ENCODE measurements at regions of chr19 and their contacts with region 1.

Region 1: GRCh38 chr19:18281082-18282020 is at the start of gene JUND:
- DNase-seq: peak; percentile 98
- H3K4me3 ChIP-seq: peak within 1 kb of the TSS; percentile 86
- H3K27ac ChIP-seq: peak within 1 kb of the TSS; percentile 100
- H3K4me1 ChIP-seq: peaks cover 23% of the 10 kb centered on the region
- H3K27me3 ChIP-seq: no peaks in the 10 kb centered on the region
- CTCF ChIP-seq: no peak
- total RNA-seq, gene JUND: 128 and 136 TPM in 2 replicates

Region 2: GRCh38 chr19:17966550-17967256 is 314.6 kb before region 1 on chr19 and contains the start of gene KCNN1:
- CTCF ChIA-PET with region 1: interaction called, 4 read pairs
- POLR2A ChIA-PET with region 1: interaction called, 11 read pairs
- intact Hi-C with region 1: no loop called
- DNase-seq: peak; percentile 83
- H3K4me3 ChIP-seq: peak within 1 kb of the TSS; percentile 90
- H3K27ac ChIP-seq: peak within 1 kb of the TSS; percentile 90
- H3K4me1 ChIP-seq: peaks cover 59% of the 10 kb centered on the region
- H3K27me3 ChIP-seq: no peaks in the 10 kb centered on the region
- CTCF ChIP-seq: no peak
- total RNA-seq, gene KCNN1: 63.5 and 81.2 TPM in 2 replicates

Region 3: GRCh38 chr19:18176367-18177310 is 104.7 kb before region 1 on chr19:
- CTCF ChIA-PET with region 1: no interaction called
- POLR2A ChIA-PET with region 1: no interaction called
- intact Hi-C with region 1: no loop called
- DNase-seq: no peak
- H3K4me3 ChIP-seq: no peak overlapping the region
- H3K27ac ChIP-seq: no peak overlapping the region
- H3K4me1 ChIP-seq: no peaks in the 10 kb centered on the region
- H3K27me3 ChIP-seq: no peaks in the 10 kb centered on the region
- CTCF ChIP-seq: no peak

Region 4: DNA sequence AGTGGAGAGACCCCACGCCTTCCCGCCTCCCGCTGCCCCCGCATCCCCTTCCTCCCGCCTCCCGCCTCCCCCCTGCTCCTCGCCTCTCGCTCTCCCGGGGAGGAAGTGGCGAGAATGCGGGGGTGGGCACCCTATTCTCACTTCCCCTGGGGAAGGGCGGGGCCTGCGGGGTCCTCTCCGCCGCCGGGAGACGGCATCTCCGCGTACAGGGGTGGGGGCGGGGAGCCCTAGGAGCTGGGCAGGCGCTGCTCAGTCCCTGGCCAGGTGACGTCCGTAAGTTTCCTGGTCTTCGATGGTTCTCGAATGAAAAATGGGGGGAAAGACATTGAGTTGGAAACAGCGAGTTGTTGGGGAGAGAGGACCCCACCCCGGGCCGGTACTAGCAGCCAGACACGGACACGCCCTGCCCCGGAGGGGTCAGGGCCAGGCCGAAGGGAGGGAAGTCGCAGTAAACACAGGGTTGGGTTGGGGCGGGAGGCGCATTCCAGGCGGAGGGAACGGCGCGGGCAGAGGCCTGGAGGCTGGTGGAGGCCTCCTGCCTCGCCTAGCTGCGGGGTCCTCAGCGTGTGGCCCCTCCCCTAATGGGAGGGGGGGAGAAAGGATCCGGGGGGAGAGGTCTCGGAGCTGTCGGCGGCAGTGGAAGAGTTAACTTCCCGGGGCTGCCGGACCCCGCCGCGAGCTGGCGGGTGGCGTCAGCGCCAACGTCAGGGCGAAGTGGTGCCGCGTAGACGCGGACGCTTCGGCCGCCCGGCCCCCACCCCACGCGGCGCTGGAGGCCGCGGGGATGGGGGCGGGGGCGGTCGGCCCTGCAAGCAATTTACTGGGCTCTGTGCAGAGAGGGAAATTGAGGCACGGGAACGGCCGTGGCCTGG is 10.5 kb after region 1 on chr19:
- CTCF ChIA-PET with region 1: interaction called, 16 read pairs
- POLR2A ChIA-PET with region 1: interaction called, 88 read pairs
- intact Hi-C with region 1: no loop called
- DNase-seq: peak; percentile 88
- H3K4me3 ChIP-seq: peak overlapping the region; percentile 64
- H3K27ac ChIP-seq: peak overlapping the region; percentile 98
- H3K4me1 ChIP-seq: peaks cover 40% of the 10 kb centered on the region
- H3K27me3 ChIP-seq: no peaks in the 10 kb centered on the region
- CTCF ChIP-seq: no peak

Region 5: GRCh38 chr19:18322759-18323460 is 41.6 kb after region 1 on chr19 and contains the start of gene LSM4:
- CTCF ChIA-PET with region 1: interaction called, 74 read pairs
- POLR2A ChIA-PET with region 1: interaction called, 27 read pairs
- intact Hi-C with region 1: loop called (anchors 1 kb)
- DNase-seq: peak; percentile 99
- H3K4me3 ChIP-seq: peak within 1 kb of the TSS; percentile 70
- H3K27ac ChIP-seq: peak within 1 kb of the TSS; percentile 92
- H3K4me1 ChIP-seq: peaks cover 11% of the 10 kb centered on the region
- H3K27me3 ChIP-seq: no peaks in the 10 kb centered on the region
- CTCF ChIP-seq: no peak
- total RNA-seq, gene LSM4: 252 and 262 TPM in 2 replicates

Region 6: DNA sequence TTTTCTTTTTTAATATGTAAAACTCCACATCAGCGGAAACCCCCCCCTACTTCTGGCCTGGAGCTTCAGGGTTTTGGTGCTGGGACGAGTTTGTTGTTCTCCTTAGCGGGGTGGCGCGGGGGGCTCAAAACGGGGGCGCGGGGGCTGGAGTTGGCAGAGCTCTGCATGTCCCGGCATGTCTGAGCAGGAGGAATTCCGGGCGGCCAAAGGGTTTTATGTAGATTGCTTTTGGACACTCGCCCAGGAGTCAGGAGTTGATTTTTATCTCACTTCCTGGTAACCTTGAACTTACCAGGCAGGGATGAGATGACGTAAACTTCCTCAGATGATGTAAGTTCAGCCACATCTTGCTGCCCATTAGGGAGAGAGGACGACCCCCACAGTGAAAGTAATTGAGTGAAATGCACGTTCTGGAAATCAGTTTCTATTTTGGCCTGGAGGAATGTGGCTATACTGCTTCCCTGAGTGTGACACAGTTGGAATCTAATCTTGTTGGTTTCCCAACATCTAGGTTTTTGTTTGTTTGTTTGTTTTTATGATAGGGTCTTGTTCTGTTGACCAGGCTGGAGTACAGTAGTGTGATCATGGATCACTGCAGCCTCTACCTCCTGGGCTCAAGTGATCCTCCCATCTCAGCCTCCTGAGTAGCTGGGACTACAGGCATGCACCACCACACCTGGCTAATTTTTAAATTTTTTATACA is 83.6 kb after region 1 on chr19:
- CTCF ChIA-PET with region 1: no interaction called
- POLR2A ChIA-PET with region 1: interaction called, 11 read pairs
- intact Hi-C with region 1: no loop called
- DNase-seq: peak; percentile 96
- H3K4me3 ChIP-seq: peak overlapping the region; percentile 4
- H3K27ac ChIP-seq: peak overlapping the region; percentile 94
- H3K4me1 ChIP-seq: peaks cover 39% of the 10 kb centered on the region
- H3K27me3 ChIP-seq: no peaks in the 10 kb centered on the region
- CTCF ChIP-seq: no peak

Region 7: GRCh38 chr19:18419195-18419698 is 137.9 kb after region 1 on chr19 and contains the start of gene SSBP4:
- CTCF ChIA-PET with region 1: interaction called, 13 read pairs
- POLR2A ChIA-PET with region 1: interaction called, 24 read pairs
- intact Hi-C with region 1: loop called (anchors 2 kb)
- DNase-seq: peak; percentile 93
- H3K4me3 ChIP-seq: peak within 1 kb of the TSS; percentile 88
- H3K27ac ChIP-seq: peak within 1 kb of the TSS; percentile 99
- H3K4me1 ChIP-seq: peaks cover 84% of the 10 kb centered on the region
- H3K27me3 ChIP-seq: no peaks in the 10 kb centered on the region
- CTCF ChIP-seq: no peak; the same call in 1 of the 2 replicates
- total RNA-seq, gene SSBP4: 242 and 248 TPM in 2 replicates